Sigmoid colon (tissue), 7 donors: ENCODE measurements at regions of chr18 and their contacts with region 1.

Region 1: DNA sequence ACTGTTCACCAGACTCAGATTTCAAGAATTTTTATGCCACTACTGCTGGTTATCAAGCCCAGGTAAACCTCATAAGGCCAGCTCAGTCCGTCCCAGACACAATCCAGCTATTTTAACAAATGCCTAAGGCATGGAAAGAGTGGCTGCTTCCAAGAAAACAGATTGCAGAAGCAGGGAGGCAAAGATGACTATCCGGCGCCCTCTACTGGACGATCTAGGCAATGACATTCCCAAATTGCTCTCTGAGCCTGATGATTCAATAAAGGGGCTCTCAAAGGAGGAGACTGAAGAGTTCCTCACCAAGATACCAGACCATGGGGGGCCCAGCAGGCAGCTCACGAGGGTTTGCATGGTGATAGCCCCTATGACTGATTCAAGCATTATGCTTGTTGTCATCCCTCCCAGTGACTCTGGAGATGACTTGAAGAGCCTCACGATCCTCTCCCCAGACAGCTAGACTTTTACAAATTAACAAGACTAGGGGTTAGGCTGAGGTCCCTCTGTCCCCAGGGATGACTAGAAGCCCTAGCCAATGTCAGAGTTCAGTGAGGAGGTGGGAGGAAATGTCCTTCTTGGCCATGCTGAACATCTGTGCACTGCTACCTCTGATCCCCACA is 25.0 kb downstream of the SERPINB8 start:
- DNase-seq: peak; percentile 69
- H3K4me3 ChIP-seq: no peak overlapping the region
- H3K27ac ChIP-seq: no peak overlapping the region
- H3K4me1 ChIP-seq: no peaks in the 10 kb centered on the region
- H3K27me3 ChIP-seq: no peaks in the 10 kb centered on the region
- CTCF ChIP-seq: peak; percentile 68 to 90 (median 72)
- EP300 ChIP-seq: no peak
- POLR2A ChIP-seq: no peak

Region 2: GRCh38 chr18:63963615-63964256 is 31.2 kb before region 1 on chr18:
- intact Hi-C with region 1: loop called (anchors 1 kb)
- DNase-seq: no peak
- H3K4me3 ChIP-seq: no peak overlapping the region
- H3K27ac ChIP-seq: no peak overlapping the region
- H3K4me1 ChIP-seq: no peaks in the 10 kb centered on the region
- H3K27me3 ChIP-seq: no peaks in the 10 kb centered on the region
- CTCF ChIP-seq: peak; percentile 42 to 79 (median 56)
- EP300 ChIP-seq: no peak
- POLR2A ChIP-seq: no peak